ENCODE measurements at regions of chrX and their contacts with region 1.

Region 1: DNA sequence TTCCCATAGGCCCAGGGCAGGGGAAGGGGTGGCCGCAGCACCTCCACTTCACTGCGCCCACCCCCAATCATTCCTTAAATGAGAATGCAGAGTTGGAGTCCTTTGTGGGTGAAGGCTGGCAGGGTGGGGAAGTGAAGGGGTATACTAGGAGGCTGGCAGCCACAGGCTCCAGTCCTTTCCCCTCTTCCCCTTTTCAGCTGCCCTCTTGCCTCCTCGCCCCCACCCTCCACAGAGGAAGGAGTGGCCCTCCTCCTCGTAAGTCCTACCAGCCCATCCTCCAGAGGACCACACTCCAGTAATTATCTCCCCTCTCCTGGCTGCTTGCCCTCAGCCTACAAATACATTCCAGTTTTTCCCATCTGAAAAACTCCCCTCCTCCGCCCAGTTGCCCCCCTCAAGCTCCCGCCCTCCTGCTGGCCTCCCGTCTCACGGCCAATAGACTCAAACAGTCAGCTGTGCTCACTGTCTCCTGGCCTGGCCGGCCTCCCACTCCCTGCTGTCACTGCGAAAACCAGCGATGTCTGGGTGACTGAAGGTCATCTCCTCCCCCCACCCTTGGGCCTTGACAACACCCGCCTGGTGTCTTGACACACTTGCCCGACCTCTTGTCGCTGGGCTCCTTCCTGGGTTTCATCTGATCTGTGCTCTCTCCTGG is 38.8 kb downstream of the EFNB1 start:
- DNase-seq: no peak
- H3K4me3 ChIP-seq: no peak overlapping the region
- CTCF ChIP-seq: no peak

Region 2: DNA sequence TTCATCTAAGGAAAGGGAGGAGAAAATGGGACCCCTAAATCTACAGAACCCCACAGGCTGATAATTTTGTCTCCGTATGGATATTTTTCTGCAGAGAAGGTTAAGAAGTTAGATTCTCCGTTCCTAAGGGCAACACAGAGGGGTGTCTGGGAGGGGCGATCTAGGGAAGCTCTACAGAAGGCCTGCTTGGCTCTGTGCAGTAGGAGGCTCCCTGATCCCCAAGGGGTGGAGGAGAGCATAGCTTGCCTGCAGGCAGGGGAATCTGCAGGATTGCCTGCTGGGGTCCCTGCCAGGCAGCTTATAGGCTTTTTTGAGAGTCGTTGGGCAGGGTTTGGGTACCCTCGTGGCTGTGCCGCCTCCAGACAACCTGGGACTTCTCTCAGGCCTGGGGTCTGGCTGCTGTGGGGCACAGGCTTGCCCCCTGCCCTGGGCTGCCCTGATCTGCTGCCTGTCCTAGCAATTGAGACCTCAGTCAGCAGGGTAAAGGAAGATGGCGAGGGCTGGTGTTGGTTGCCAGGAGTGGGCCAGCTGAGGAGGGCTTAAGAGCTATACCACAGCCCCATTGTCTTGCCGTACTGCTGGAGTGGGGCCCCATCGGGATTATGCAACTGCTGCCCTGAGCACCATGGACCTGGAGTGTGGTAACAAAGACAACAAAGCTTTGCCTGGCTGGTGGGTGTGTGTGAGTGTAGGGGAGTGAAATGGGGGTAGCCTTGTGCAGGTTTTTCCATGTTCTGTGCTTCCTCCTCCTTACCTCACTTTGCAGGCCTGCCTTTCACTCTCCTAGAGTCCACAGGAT is 35.3 kb after region 1 on chrX:
- in situ Hi-C with region 1: loop called (anchors 5 kb)
- DNase-seq: no peak
- H3K4me3 ChIP-seq: no peak overlapping the region
- CTCF ChIP-seq: no peak

Region 3: GRCh38 chrX:68929332-68930150 is 62.0 kb after region 1 on chrX:
- in situ Hi-C with region 1: no loop called
- DNase-seq: peak; percentile 58
- H3K4me3 ChIP-seq: no peak overlapping the region
- CTCF ChIP-seq: no peak